ENCODE measurements at regions of chr2 and their contacts with region 1.

Region 1: DNA sequence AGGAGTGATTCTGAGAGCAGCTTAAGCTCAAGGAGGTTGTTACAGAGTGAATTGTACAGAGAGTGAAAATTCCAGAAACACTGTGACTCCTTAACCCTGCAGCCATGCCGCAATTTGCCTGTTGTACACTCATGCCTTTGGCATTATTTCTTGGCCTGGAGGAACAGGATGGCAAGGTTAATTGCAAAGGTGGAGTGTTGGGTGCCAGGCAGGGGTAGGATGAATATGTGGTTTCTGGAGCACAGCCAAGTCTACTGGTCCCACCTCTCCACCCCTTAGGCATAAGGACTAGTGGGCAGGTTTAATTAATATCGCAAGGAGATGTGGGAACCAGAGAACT is 250.2 kb downstream of the LRRTM1 start:
- DNase-seq: peak; percentile 26
- ATAC-seq: peak; percentile 82
- H3K4me3 ChIP-seq: no peak overlapping the region
- H3K27ac ChIP-seq: no peak overlapping the region
- H3K4me1 ChIP-seq: peaks cover 5% of the 10 kb centered on the region
- H3K27me3 ChIP-seq: no peaks in the 10 kb centered on the region
- CTCF ChIP-seq: no peak
- POLR2A ChIP-seq: no peak
- RAD21 ChIP-seq: no peak

Region 2: GRCh38 chr2:79389481-79389880 is 664.8 kb before region 1 on chr2:
- CTCF ChIA-PET with region 1: no interaction called
- POLR2A ChIA-PET with region 1: no interaction called
- dilution Hi-C with region 1: no loop called
- in situ Hi-C with region 1: no loop called
- intact Hi-C with region 1: no loop called
- DNase-seq: no peak
- ATAC-seq: no peak
- H3K4me3 ChIP-seq: no peak overlapping the region
- H3K27ac ChIP-seq: no peak overlapping the region
- H3K4me1 ChIP-seq: no peaks in the 10 kb centered on the region
- H3K27me3 ChIP-seq: no peaks in the 10 kb centered on the region
- CTCF ChIP-seq: no peak
- POLR2A ChIP-seq: no peak
- RAD21 ChIP-seq: no peak

Region 3: DNA sequence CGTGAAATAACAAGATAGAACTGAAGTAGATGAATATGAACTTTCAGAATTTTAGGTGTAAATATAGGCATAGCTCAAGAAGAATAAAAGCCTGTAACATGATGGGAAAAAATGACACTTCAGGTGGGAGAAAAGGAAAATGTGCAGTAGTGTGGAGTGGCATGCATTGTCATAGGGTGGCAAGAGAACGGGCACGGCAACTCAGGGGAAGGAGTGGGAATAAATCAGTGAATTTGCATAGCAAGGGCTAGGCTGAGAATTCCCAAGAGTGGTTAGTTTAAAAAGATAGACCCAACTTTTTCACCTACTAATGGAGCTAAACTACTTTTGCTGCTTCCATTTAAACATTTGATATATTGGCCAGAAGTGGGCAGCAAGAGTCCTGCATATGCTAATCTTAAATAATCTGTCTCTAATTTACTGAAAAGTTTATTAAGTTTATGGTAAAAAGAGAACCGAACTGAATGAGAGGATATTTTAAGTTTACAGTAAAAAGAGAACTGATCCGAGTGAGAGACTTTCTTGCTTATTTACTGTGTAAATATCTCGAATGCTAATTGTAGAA is 313.3 kb before region 1 on chr2:
- CTCF ChIA-PET with region 1: no interaction called
- POLR2A ChIA-PET with region 1: no interaction called
- dilution Hi-C with region 1: no loop called
- in situ Hi-C with region 1: no loop called
- intact Hi-C with region 1: no loop called
- DNase-seq: no peak
- ATAC-seq: no peak
- H3K4me3 ChIP-seq: no peak overlapping the region
- H3K27ac ChIP-seq: no peak overlapping the region
- H3K4me1 ChIP-seq: no peaks in the 10 kb centered on the region
- H3K27me3 ChIP-seq: no peaks in the 10 kb centered on the region
- CTCF ChIP-seq: no peak
- POLR2A ChIP-seq: no peak
- RAD21 ChIP-seq: no peak

Region 4: DNA sequence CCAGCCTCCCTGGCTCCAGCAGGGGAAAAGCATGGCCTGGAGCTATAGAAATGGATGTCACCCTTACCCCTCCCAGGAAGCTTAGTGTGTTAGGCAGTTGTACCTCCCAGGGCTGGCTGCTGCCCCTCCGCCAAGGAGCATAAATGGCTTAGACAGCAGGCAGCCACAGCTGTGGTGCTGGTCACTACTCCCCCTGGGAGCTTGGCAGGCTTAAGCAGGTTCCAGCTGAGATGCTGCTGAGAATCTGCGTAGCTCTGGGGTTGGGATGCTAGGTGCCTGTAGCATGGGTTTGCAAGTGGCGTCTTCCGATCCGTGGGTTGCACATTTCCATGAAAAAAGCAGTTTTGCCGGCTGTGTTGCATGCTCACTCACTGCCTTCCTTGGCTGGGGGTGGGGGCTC is 171.8 kb before region 1 on chr2:
- CTCF ChIA-PET with region 1: no interaction called
- POLR2A ChIA-PET with region 1: no interaction called
- dilution Hi-C with region 1: no loop called
- in situ Hi-C with region 1: no loop called
- intact Hi-C with region 1: no loop called
- DNase-seq: no peak
- ATAC-seq: no peak
- H3K4me3 ChIP-seq: no peak overlapping the region
- H3K27ac ChIP-seq: no peak overlapping the region
- H3K4me1 ChIP-seq: no peaks in the 10 kb centered on the region
- H3K27me3 ChIP-seq: no peaks in the 10 kb centered on the region
- CTCF ChIP-seq: no peak
- POLR2A ChIP-seq: no peak
- RAD21 ChIP-seq: no peak

Region 5: GRCh38 chr2:79952616-79953015 is 101.7 kb before region 1 on chr2:
- CTCF ChIA-PET with region 1: no interaction called
- POLR2A ChIA-PET with region 1: no interaction called
- dilution Hi-C with region 1: no loop called
- in situ Hi-C with region 1: no loop called
- intact Hi-C with region 1: loop called (anchors 5 kb)
- DNase-seq: peak; percentile 51
- ATAC-seq: peak; percentile 79
- H3K4me3 ChIP-seq: no peak overlapping the region
- H3K27ac ChIP-seq: peak overlapping the region; percentile 96; the same call in 1 of the 2 replicates
- H3K4me1 ChIP-seq: peaks cover 12% of the 10 kb centered on the region
- H3K27me3 ChIP-seq: peaks cover 2% of the 10 kb centered on the region; the same call in 1 of the 2 replicates
- CTCF ChIP-seq: no peak
- POLR2A ChIP-seq: no peak
- RAD21 ChIP-seq: no peak

Region 6: DNA sequence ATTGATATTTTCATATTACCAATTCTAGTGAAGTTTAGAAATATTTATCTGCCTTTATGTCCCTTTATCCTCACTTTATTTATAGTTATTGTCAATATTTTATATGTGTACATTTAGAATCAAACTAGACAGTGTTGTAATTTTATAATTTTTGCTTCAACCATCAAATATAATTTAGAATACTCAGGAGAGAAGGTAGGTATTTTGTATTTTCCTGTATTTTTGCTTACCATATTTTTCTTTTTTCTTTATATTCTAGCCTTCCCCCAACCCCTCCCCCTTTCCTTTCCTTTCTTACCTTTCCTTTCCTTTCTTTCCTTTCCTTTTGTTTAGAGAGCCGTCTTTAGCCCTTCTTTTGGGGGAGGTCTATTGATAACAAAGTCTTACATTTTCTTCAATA is 110.1 kb after region 1 on chr2:
- CTCF ChIA-PET with region 1: no interaction called
- POLR2A ChIA-PET with region 1: no interaction called
- dilution Hi-C with region 1: no loop called
- in situ Hi-C with region 1: no loop called
- intact Hi-C with region 1: no loop called
- DNase-seq: no peak
- ATAC-seq: no peak
- H3K4me3 ChIP-seq: no peak overlapping the region
- H3K27ac ChIP-seq: no peak overlapping the region
- H3K4me1 ChIP-seq: no peaks in the 10 kb centered on the region
- H3K27me3 ChIP-seq: no peaks in the 10 kb centered on the region
- CTCF ChIP-seq: no peak
- POLR2A ChIP-seq: no peak
- RAD21 ChIP-seq: no peak

Measured in IMR-90 (cell line).